Activated CD4-positive, alpha-beta T cell treated with anti-CD3 and anti-CD28 coated beads for 36 hours (primary cell): ENCODE measurements at regions of chr16 and their contacts with region 1.

Region 1: GRCh38 chr16:77236063-77236511 is 36.9 kb downstream of the SYCE1L start:
- DNase-seq: peak; percentile 94
- ATAC-seq: peak; percentile 97
- H3K4me3 Mint-ChIP-seq: no peak overlapping the region
- H3K27ac Mint-ChIP-seq: no peak overlapping the region
- H3K4me1 Mint-ChIP-seq: peaks cover 3% of the 10 kb centered on the region
- H3K27me3 Mint-ChIP-seq: peaks cover 6% of the 10 kb centered on the region

Region 2: DNA sequence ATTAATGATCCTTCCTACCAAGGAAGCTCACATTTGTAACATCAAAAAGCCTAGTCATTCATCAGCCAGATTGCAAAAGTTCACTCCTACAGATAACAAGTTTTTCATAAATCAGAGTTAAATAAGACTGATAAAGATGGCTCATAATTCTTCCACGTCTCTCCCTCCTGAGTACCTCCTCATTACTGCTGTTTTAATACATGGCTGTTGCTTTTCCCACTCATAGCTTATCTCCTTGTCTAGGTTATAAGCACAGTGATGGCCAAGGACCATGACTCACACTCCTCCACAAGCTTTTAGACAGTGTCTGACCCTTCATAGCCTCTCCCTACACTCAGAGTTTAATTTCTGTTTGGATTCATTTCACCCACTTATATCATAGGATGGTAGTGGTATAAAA is 146.0 kb before region 1 on chr16:
- CTCF ChIA-PET with region 1: no interaction called
- POLR2A ChIA-PET with region 1: no interaction called
- intact Hi-C with region 1: no loop called
- DNase-seq: no peak
- ATAC-seq: no peak
- H3K4me3 Mint-ChIP-seq: no peak overlapping the region
- H3K27ac Mint-ChIP-seq: no peak overlapping the region
- H3K4me1 Mint-ChIP-seq: no peaks in the 10 kb centered on the region
- H3K27me3 Mint-ChIP-seq: peaks cover 6% of the 10 kb centered on the region

Region 3: DNA sequence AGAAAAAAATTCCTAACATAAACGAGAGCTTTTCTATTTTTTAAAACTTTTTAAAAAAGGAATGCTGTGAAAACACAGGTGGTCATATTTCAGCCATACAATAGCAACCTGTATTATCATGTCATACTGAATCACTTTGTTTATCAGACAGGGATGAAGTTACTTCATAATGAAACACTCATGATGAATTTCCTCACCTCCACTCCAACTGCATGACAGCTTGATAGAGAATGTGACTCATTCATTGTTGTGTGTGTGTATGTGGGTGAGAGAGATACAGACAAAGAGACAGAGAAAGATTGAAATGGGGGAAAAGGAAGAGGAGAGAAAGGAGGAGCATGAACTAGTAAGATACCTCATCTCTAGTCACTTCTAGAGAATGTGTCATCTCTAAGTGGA is 72.1 kb after region 1 on chr16:
- CTCF ChIA-PET with region 1: interaction called, 4 read pairs
- POLR2A ChIA-PET with region 1: no interaction called
- intact Hi-C with region 1: loop called in 1 of 2 experiments (anchors 1 kb)
- DNase-seq: no peak
- ATAC-seq: peak; percentile 95
- H3K4me3 Mint-ChIP-seq: no peak overlapping the region
- H3K27ac Mint-ChIP-seq: peak overlapping the region; percentile 73
- H3K4me1 Mint-ChIP-seq: peaks cover 28% of the 10 kb centered on the region
- H3K27me3 Mint-ChIP-seq: peaks cover 14% of the 10 kb centered on the region

Region 4: GRCh38 chr16:77437859-77438258 is 201.8 kb after region 1 on chr16:
- CTCF ChIA-PET with region 1: no interaction called
- POLR2A ChIA-PET with region 1: no interaction called
- intact Hi-C with region 1: loop called (anchors 2 to 10 kb)
- DNase-seq: no peak
- ATAC-seq: no peak
- H3K4me3 Mint-ChIP-seq: no peak overlapping the region
- H3K27ac Mint-ChIP-seq: no peak overlapping the region
- H3K4me1 Mint-ChIP-seq: no peaks in the 10 kb centered on the region
- H3K27me3 Mint-ChIP-seq: peaks cover 42% of the 10 kb centered on the region

Region 5: GRCh38 chr16:77660311-77660710 is 424.2 kb after region 1 on chr16:
- CTCF ChIA-PET with region 1: interaction called, 3 read pairs
- POLR2A ChIA-PET with region 1: no interaction called
- intact Hi-C with region 1: loop called in 1 of 2 experiments (anchors 2 kb)
- DNase-seq: no peak
- ATAC-seq: no peak
- H3K4me3 Mint-ChIP-seq: no peak overlapping the region
- H3K27ac Mint-ChIP-seq: no peak overlapping the region
- H3K4me1 Mint-ChIP-seq: no peaks in the 10 kb centered on the region
- H3K27me3 Mint-ChIP-seq: peaks cover 26% of the 10 kb centered on the region

Region 6: GRCh38 chr16:78002915-78003538 is 766.9 kb after region 1 on chr16:
- CTCF ChIA-PET with region 1: no interaction called
- POLR2A ChIA-PET with region 1: no interaction called
- intact Hi-C with region 1: loop called in 1 of 2 experiments (anchors 10 kb)
- DNase-seq: peak; percentile 90
- ATAC-seq: peak; percentile 99
- H3K4me3 Mint-ChIP-seq: no peak overlapping the region
- H3K27ac Mint-ChIP-seq: no peak overlapping the region
- H3K4me1 Mint-ChIP-seq: no peaks in the 10 kb centered on the region
- H3K27me3 Mint-ChIP-seq: peaks cover 16% of the 10 kb centered on the region